Cardiac septum (tissue), 1 donor: ENCODE measurements at regions of chrX and their contacts with region 1.

Region 1: GRCh38 chrX:129931411-129932015 is 25.5 kb downstream of the UTP14A start:
- DNase-seq: peak; percentile 93

Region 2: GRCh38 chrX:129982274-129983251 is 51.0 kb after region 1 on chrX and contains the start of gene BCORL1:
- intact Hi-C with region 1: loop called (anchors 2 kb)
- DNase-seq: peak; percentile 95
- total RNA-seq, gene BCORL1: 9.8 TPM